ENCODE measurements at regions of chr12 and their contacts with region 1.

Region 1: GRCh38 chr12:69070319-69071090 is 137.5 kb upstream of the CPM start:
- DNase-seq: no peak
- H3K4me3 ChIP-seq: no peak overlapping the region
- CTCF ChIP-seq: peak; percentile 86

Region 2: DNA sequence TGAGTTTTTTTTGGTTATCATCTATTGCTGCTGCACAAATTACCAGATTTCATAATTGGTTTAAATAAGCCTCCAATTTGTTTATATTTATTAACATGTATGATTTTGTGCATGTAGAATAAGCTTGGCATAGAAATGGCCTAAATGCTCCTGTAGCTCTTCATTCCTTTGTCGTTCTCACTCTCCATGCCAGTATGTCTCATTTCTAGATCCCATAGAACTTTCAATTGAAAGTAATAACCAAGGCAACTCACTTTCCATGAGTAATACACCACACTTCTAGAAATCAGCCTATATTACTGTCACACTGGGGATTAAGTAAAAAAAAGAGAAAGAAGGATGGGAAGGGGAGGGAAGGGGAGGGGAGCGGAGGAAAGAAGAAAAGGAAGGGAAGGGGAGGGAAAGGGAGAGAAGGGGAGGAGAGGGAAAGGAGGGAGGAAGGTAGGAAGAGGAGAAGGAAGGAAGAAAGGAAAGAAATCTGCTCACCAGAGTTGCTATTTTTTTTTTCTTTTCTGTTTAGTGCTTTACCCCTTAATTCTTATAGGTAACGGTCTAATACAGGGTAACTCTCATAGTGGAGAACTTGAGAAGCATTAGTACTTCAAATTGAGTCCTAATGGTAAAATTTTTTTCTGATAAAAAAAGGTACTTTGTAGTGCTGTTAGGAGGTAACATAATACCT is 217.0 kb before region 1 on chr12:
- CTCF ChIA-PET with region 1: interaction called, 13 read pairs
- POLR2A ChIA-PET with region 1: no interaction called
- DNase-seq: no peak
- H3K4me3 ChIP-seq: no peak overlapping the region
- CTCF ChIP-seq: no peak

Region 3: DNA sequence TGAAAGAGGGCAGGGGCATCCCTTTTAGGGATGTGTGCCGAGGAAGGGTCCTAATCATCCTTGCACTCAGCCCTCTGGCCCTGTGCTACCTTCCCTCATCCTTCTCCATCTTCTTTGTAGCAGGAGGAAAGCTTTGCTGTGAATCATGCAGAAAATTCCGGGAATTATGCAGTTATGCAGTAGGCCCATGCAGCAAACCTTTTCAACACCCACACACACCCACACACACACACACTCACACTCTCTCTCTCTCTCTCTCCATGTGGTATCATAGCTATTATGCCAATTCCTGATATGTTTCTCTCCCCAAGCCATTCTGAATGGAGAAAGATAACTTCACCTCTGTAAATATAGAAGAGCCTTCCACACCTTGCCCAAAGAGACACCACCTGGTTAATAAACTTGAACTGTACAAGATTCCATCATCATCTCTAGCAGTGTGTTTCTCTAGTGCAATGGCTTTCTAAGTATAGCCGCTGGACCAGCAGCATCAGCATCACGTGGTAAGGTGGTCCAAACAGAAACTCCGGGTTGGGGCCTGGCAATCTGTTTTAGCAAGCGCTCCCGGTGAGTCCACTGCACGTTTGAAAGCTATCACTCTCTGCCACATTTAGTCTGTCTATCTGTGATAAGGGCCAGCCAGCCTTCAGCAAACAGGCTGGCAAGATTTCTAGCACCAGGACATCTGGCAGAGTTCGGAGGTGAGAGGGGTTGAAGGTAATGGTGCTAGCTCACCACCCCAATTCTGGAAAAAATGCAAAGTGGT is 204.9 kb before region 1 on chr12:
- CTCF ChIA-PET with region 1: interaction called, 67 read pairs
- POLR2A ChIA-PET with region 1: no interaction called
- DNase-seq: no peak
- H3K4me3 ChIP-seq: no peak overlapping the region
- CTCF ChIP-seq: no peak

Region 4: GRCh38 chr12:68871921-68872320 is 198.6 kb before region 1 on chr12:
- CTCF ChIA-PET with region 1: interaction called, 67 read pairs
- POLR2A ChIA-PET with region 1: no interaction called
- DNase-seq: no peak
- H3K4me3 ChIP-seq: no peak overlapping the region
- CTCF ChIP-seq: peak; percentile 38

Region 5: GRCh38 chr12:69059483-69060457 is 10.7 kb before region 1 on chr12:
- CTCF ChIA-PET with region 1: interaction called, 14 read pairs
- POLR2A ChIA-PET with region 1: no interaction called
- DNase-seq: peak; percentile 67
- H3K4me3 ChIP-seq: no peak overlapping the region
- CTCF ChIP-seq: no peak

Region 6: GRCh38 chr12:69085852-69086251 is 15.3 kb after region 1 on chr12:
- CTCF ChIA-PET with region 1: interaction called, 17 read pairs
- POLR2A ChIA-PET with region 1: no interaction called
- DNase-seq: no peak
- H3K4me3 ChIP-seq: no peak overlapping the region
- CTCF ChIP-seq: no peak

Region 7: DNA sequence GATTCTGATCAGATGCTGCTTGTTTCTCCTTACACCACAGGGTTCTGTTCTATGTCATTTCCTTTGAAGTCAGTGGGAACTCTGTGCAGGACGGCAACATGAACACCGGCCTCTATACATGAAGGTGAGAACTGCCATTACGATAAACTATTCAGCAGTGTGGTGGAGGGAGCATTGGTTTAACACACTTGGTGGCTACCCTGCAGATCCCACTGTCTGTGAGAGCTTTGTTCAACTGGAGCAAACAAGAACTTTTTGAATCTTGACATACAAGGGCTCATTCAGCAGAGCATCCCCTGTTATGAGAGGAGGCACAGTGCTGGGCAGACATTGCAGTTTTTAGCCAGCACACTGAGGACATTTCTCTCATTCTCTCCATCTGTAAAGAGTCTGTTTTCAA is 389.0 kb after region 1 on chr12:
- CTCF ChIA-PET with region 1: no interaction called
- POLR2A ChIA-PET with region 1: no interaction called
- DNase-seq: no peak
- H3K4me3 ChIP-seq: no peak overlapping the region
- CTCF ChIP-seq: no peak